Right cardiac atrium (tissue), 5 donors: ENCODE measurements at regions of chr12 and their contacts with region 1.

Region 1: GRCh38 chr12:6062757-6063735 is 61.4 kb downstream of the VWF start:
- DNase-seq: peak in 2 of 3 donors; percentile 76 to 78
- ATAC-seq: peak; percentile 5 to 38
- H3K4me3 ChIP-seq: no peak overlapping the region
- H3K27ac ChIP-seq: no peak overlapping the region
- H3K4me1 ChIP-seq: no peaks in the 10 kb centered on the region
- H3K27me3 ChIP-seq: no peaks in the 10 kb centered on the region

Region 2: DNA sequence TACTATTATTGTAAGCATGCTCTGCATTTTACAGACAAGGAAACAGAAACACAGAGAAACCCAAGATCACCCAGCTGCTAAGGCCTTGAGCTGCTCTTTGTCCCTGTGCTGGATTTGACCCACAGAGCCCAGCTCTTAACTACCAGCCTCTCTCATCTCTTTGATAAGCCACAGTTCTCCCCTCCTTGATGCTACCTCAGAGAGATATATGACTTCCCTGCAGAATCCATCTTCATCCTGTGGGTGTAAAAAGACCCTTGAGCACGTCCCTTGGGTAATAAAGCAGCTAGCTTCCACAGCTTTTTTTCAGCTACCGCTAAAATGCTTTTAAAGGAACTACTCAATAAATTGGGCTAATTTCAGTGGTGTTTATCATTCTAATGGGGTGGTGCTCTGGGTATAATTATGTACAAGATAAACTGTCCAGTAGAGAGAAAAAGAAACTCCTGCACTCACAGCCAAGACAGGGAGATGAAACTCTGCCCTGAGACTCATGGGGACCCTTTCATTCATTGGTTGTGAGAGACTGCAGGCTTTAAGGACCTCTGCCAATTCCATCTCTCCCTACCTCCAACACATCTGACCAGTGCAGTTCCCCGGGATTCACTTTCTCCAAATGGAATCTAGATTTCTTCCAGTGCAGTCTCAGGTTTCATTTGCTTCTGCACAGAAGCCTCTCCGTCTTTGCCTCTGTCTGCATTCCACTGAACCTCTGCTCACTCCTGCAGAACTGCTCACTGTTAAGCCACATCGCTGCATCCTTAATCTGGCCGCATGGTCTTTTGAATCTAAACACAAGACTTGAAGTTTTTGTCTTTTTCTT is 655.8 kb before region 1 on chr12:
- intact Hi-C with region 1: no loop called
- DNase-seq: no peak
- ATAC-seq: no peak
- H3K4me3 ChIP-seq: no peak overlapping the region
- H3K27ac ChIP-seq: no peak overlapping the region
- H3K4me1 ChIP-seq: no peaks in the 10 kb centered on the region
- H3K27me3 ChIP-seq: peaks cover 2% of the 10 kb centered on the region

Region 3: DNA sequence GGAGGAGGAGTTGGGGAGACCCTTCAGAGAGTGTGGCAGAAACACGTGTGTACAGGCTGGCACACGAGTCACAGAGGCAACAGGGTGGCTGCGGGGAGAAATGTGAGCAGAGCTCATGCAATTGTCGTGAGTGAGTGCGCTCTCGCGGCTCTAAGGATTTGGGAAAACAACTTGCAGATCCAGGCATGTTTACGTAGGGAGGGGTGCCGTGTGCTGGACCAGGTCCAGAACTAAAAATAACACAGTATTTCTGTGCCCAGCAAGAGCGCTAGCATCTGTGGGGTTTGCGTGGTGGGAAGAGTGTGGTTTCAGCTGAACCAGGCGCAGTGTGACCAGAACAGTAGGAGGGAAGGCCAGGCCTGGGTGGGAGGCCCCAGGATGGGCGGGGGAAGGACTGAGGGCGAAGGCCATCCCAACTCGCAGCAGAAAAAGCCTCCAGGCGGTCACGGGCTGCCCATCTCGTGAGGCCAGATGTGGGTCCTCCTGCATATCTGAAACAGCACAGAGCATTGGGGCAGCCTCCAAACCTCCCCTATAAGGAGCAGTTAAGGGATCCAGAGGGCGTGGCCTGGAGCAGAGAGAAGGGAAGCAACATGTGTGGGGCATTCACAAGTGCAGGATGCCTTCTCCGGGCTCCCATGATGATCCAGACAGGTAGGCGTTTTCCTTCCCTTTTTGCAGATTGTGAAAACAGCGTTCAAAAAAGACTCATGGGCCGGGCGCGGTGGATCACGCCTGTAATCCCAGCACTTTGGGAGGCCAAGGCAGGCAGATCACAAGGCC is 119.3 kb after region 1 on chr12:
- intact Hi-C with region 1: loop called in 1 of 4 experiments (anchors 10 kb)
- DNase-seq: peak; percentile 75 to 88 (median 88)
- ATAC-seq: peak; percentile 79
- H3K4me3 ChIP-seq: no peak overlapping the region
- H3K27ac ChIP-seq: peak overlapping the region; percentile 65
- H3K4me1 ChIP-seq: peaks cover 26% of the 10 kb centered on the region
- H3K27me3 ChIP-seq: no peaks in the 10 kb centered on the region

Region 4: DNA sequence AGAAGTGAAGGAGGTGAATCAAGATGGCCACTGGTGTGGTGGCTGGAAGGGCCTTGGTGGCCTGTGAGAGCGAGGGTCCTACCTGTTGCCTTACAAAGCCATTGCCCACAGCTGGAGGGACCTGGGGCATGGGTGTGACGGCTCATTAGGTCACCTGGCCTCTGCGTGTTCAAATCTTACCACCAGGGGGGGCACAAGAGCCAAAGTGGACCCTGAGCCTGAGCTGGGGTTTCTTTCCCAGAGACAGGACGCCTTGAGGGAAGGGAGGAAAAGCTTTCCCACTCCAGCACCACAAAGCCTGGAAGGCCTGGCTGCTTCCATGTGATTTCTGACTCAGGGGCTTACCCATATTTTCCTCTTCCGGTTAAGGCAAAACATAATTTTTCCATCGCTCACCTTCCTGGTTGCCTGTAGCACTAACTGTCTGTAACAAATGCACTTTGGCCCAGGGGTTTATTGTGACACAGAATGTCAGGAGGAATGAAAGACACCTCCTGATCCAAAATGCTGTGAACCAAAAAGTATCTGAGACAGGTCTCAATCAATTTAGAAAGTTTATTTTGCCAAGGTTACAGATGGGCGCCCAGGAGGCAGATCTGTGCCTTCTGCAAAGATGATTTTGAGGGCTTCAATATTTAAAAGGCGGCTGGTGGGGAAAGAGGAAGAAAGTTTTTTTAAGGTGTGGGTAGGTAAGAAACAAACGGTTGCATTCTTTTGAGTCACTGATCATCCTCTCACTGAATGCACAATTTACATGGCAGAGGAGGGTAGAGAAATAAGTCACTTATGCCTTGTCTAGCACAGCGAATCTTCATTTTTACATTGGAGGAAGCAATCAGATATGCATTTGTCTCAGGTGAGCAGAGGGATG is 132.9 kb after region 1 on chr12:
- intact Hi-C with region 1: loop called in 1 of 4 experiments (anchors 10 kb)
- DNase-seq: peak; percentile 83 to 92 (median 89)
- ATAC-seq: peak; percentile 67 to 75
- H3K4me3 ChIP-seq: no peak overlapping the region
- H3K27ac ChIP-seq: peak overlapping the region; percentile 22
- H3K4me1 ChIP-seq: no peaks in the 10 kb centered on the region
- H3K27me3 ChIP-seq: no peaks in the 10 kb centered on the region

Region 5: DNA sequence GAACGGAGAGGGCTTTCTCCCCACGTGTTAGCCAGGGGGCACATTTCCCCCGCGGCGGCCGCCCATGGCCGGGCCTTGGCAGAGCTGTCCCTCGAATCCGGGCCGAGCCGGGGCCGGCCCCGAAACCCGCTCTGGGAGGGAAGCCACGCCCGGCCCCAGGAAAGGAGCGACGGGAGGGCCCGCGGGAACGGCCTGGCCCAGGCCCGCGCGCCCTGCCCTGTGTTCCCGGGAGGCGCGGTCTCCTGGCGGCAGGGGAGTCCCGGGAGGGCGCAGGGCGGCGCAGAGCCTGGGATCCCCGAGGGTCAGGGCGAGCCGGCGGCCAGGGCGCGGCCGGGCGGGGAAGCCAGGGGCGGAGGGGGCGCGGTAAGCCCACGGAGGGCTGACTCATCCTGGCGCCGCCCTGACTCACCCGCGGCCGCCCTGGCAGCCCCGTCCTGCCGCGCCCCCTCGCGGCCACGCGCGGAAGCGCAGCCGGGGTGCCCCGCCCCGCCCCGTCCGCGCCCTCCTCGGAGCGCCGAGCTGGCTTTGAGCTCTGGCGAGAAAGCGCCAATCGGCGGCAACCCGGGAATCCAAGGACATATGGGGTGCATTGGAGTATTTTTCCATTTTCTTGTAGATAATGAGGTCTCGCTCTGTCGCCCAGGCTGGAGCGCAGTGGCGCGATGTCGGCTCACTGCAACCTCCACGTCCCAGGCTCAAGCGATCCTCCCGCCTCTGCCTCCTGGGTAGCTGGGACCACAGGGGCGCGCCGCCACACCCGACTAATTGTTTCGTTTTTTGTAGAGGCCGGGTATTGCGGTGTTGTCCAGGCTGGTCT is 215.6 kb after region 1 on chr12:
- intact Hi-C with region 1: loop called in 2 of 4 experiments (anchors 2 to 5 kb)
- DNase-seq: peak; percentile 91 to 95 (median 94)
- ATAC-seq: peak; percentile 83 to 95
- H3K4me3 ChIP-seq: peak overlapping the region; percentile 37
- H3K27ac ChIP-seq: peak overlapping the region; percentile 31
- H3K4me1 ChIP-seq: peaks cover 13% of the 10 kb centered on the region
- H3K27me3 ChIP-seq: no peaks in the 10 kb centered on the region

Region 6: DNA sequence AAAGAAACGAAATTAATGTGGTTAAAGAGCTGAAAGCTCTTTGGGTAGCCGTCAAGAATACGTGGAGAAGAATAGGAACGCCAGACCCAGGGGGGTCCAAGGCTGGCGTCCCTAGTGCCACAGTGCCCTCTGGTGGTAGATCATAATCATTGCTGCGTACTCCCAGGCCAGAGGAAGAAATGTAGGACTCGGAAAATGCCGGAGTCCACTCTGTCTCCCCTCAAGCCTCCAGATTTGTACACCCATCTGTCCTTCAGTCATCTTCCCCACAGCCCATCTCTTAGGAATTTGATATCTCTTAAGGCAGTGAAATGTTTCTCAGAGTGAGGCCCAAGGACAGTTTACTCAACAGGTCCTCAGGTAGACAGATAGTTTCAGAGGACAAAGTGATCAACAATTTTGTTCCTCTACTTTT is 222.0 kb after region 1 on chr12:
- intact Hi-C with region 1: loop called (anchors 2 to 5 kb)
- DNase-seq: peak; percentile 38 to 73 (median 69)
- ATAC-seq: peak; percentile 73 to 83
- H3K4me3 ChIP-seq: no peak overlapping the region
- H3K27ac ChIP-seq: no peak overlapping the region
- H3K4me1 ChIP-seq: peaks cover 3% of the 10 kb centered on the region
- H3K27me3 ChIP-seq: no peaks in the 10 kb centered on the region

Region 7: GRCh38 chr12:6764011-6764828 is 701.2 kb after region 1 on chr12:
- intact Hi-C with region 1: no loop called
- DNase-seq: peak; percentile 96 to 97 (median 97)
- ATAC-seq: peak; percentile 92
- H3K4me3 ChIP-seq: peak overlapping the region; percentile 16
- H3K27ac ChIP-seq: peak overlapping the region; percentile 82
- H3K4me1 ChIP-seq: peaks cover 9% of the 10 kb centered on the region
- H3K27me3 ChIP-seq: no peaks in the 10 kb centered on the region